ENCODE measurements at regions of chr19 and their contacts with region 1.

Region 1: GRCh38 chr19:58196901-58197616 is 14.2 kb downstream of the ZNF274 start:
- DNase-seq: no peak
- ATAC-seq: no peak

Region 2: DNA sequence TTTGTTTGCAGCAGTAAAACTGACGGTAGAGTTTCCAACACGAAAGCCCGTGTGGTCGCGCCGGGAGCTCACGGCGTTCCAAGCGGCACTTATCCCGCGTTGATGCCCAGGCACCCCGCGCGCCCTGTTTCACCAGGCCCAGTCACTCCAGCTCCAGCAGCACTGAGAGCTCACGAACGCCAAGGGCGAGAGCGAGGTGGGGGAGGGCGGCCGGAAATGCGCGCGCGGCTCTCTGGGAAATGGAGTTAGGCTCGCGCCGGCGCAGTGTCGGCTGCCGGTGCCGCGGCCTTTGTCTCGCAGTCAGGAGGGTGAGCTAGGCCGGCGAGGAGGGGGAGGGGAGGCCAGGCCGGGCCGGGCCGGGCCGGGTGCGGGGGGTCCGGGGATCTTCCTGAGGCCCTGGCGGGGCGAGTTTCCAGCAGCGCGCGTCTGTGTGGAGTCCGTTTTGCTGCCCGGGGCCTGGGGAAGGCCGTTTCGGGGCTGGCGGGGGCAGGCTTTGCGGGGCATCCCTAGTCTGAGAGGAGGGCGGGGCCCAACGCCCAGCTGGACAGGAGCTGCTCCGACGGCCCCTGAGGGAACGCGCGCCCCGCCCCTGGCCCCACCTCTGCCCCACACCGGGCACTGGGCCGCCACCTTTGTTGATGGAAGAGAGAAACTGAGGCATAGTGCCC is 137.9 kb before region 1 on chr19 and contains the start of gene ZNF135:
- intact Hi-C with region 1: no loop called
- DNase-seq: peak; percentile 93
- ATAC-seq: peak; percentile 97 to 98
- total RNA-seq, gene ZNF135: 2.5 to 3.4 TPM

Region 3: DNA sequence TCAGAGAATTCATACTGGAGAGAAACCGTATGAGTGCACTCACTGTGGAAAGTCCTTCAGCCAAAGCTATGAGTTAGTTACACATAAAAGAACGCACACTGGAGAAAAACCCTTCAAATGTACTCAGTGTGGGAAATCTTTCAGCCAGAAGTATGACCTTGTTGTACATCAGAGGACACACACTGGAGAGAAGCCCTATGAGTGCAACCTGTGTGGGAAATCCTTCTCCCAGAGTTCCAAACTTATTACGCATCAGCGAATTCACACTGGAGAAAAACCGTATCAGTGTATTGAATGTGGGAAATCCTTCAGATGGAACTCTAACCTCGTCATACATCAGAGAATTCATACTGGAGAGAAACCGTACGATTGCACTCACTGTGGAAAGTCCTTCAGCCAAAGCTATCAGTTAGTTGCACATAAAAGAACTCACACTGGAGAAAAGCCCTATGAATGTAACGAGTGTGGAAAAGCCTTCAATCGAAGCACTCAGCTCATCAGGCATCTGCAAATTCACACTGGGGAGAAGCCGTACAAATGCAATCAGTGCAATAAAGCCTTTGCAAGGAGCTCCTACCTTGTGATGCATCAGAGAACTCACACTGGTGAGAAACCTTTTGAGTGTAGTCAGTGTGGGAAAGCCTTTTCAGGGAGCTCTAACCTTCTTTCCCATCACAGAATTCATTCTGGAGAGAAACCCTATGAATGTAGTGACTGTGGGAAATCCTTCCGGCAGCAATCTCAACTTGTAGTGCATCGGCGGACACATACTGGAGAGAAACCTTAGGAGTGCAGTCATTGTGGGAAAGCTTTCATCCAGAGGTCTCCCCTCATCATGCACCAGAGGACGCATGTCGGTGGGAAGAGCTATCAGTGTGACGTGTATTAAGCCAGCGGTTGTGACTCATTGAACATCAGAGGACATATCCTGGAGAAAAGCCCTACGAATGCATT is 65.2 kb after region 1 on chr19:
- intact Hi-C with region 1: loop called in 1 of 2 experiments (anchors 5 kb)
- DNase-seq: no peak
- ATAC-seq: no peak